ENCODE measurements at regions of chr18 and their contacts with region 1.

Region 1: DNA sequence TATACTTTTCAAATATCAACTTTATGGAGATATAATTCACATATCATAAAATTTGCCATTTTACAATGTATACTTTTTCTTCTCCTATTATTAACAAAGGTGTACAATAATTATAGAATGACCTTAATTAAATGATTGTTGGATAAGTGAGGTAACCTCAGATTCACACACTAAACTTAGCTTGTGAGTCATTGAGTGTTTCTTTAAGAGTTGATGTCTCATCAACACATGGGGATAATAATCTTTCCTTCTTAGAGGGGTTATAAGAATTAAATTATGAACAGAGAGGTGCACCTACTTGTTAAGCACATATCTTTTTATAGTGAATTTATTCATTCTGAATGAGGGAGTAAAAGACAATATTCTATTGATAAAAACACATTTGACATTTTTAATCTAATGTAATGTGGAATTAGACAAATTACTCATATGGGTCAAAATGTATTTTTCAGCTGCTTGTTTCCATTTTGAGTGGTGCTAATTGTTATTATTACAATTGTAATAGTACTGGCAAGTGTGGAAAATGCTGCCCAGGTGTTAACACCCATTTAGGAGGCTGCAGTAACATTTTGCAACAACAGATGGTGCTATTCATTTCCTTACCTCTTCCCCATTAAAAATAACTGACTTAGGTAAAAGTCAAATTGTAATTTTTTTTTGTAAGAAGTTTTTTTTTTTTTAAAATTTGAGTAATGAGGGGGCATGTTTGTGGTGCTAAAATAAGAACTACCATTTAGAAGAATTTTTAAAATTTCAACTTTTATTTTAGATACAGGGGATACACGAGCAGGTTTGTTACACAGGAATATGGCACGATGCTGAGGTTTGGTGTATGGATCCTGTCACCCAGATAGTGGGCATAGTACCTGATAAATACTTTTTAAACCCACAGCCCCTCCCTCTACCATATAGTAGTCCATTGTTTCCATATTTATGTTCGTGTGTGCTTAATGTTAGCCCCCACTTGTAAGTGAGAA is 32.1 kb upstream of the DYNAP start:
- DNase-seq: peak; percentile 60
- H3K4me3 Mint-ChIP-seq: no peak overlapping the region
- H3K27ac Mint-ChIP-seq: no peak overlapping the region
- H3K4me1 Mint-ChIP-seq: no peaks in the 10 kb centered on the region
- H3K27me3 Mint-ChIP-seq: no peaks in the 10 kb centered on the region
- CTCF ChIP-seq: peak; percentile 63

Region 2: DNA sequence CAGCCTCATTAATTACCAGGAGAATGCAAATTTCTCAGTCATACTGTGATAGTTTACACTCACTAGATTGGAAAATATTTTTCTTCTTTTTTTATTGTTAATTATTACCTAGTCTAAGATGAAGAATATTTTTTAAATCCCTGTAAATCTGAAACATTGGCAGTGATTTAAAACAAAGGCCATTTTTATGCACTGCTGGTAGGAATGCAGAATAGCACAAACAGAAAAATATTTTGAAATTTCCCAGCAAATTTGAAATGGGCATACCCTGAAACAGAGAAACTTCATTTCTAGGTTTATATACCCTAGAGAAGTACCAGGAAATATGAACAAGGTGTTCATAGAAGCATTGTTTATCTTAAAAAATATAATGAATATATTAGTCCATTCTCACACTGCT is 63.2 kb after region 1 on chr18:
- CTCF ChIA-PET with region 1: no interaction called
- POLR2A ChIA-PET with region 1: no interaction called
- intact Hi-C with region 1: no loop called
- DNase-seq: no peak
- H3K4me3 Mint-ChIP-seq: no peak overlapping the region
- H3K27ac Mint-ChIP-seq: no peak overlapping the region
- H3K4me1 Mint-ChIP-seq: no peaks in the 10 kb centered on the region
- H3K27me3 Mint-ChIP-seq: no peaks in the 10 kb centered on the region
- CTCF ChIP-seq: peak; percentile 9

Region 3: GRCh38 chr18:54641734-54642133 is 82.8 kb after region 1 on chr18:
- CTCF ChIA-PET with region 1: interaction called, 13 read pairs
- POLR2A ChIA-PET with region 1: no interaction called
- intact Hi-C with region 1: no loop called
- DNase-seq: peak; percentile 1
- H3K4me3 Mint-ChIP-seq: no peak overlapping the region
- H3K27ac Mint-ChIP-seq: no peak overlapping the region
- H3K4me1 Mint-ChIP-seq: no peaks in the 10 kb centered on the region
- H3K27me3 Mint-ChIP-seq: no peaks in the 10 kb centered on the region
- CTCF ChIP-seq: no peak

Region 4: GRCh38 chr18:54647176-54647575 is 88.3 kb after region 1 on chr18:
- CTCF ChIA-PET with region 1: interaction called, 13 read pairs
- POLR2A ChIA-PET with region 1: no interaction called
- intact Hi-C with region 1: loop called (anchors 1 kb)
- DNase-seq: peak; percentile 66
- H3K4me3 Mint-ChIP-seq: no peak overlapping the region
- H3K27ac Mint-ChIP-seq: no peak overlapping the region
- H3K4me1 Mint-ChIP-seq: no peaks in the 10 kb centered on the region
- H3K27me3 Mint-ChIP-seq: no peaks in the 10 kb centered on the region
- CTCF ChIP-seq: peak; percentile 62

Region 5: DNA sequence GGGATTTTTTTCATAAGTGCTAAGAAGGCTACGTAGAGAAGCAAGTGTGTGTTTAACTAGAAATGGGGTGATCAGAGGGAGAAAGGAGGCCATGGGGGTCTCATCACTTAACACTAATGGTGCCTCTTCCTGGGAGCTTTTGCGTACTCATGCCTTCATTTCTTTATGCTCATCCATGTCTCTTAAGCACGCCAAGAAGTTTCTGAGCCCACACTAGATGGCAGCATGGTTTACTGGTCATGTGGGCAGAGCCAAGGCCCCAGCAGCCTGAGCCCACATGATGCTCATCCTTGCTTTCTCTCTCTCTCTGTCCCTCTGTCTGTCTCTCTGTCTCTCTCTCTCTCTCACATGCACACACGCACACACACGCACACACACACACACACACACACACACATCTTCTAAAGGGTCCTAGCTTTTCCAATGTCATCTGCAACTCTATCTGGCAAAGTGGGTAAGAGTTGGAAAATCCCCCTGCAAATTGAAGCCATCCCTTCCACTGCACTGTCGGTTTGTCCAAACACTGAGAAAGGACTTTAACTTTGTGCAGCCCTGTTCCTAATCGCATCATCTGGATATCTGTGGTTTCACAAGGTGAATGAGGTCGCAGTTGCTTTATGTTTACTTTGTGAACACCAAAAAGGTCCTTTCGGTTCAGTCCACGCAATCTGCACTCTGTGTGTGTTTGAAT is 537.5 kb after region 1 on chr18:
- CTCF ChIA-PET with region 1: no interaction called
- POLR2A ChIA-PET with region 1: no interaction called
- intact Hi-C with region 1: no loop called
- DNase-seq: peak; percentile 65
- H3K4me3 Mint-ChIP-seq: no peak overlapping the region
- H3K27ac Mint-ChIP-seq: no peak overlapping the region
- H3K4me1 Mint-ChIP-seq: peaks cover 11% of the 10 kb centered on the region
- H3K27me3 Mint-ChIP-seq: no peaks in the 10 kb centered on the region
- CTCF ChIP-seq: peak; percentile 29